Cardiac septum (tissue), 1 donor: ENCODE measurements at regions of chr6 and their contacts with region 1.

Region 1: GRCh38 chr6:16332175-16332542 is 93.8 kb downstream of the GMPR start:
- DNase-seq: peak; percentile 89

Region 2: GRCh38 chr6:16372029-16372776 is 40.0 kb after region 1 on chr6:
- intact Hi-C with region 1: no loop called
- DNase-seq: no peak

Region 3: GRCh38 chr6:16409531-16410441 is 77.6 kb after region 1 on chr6:
- intact Hi-C with region 1: loop called (anchors 2 kb)
- DNase-seq: peak; percentile 85

Region 4: DNA sequence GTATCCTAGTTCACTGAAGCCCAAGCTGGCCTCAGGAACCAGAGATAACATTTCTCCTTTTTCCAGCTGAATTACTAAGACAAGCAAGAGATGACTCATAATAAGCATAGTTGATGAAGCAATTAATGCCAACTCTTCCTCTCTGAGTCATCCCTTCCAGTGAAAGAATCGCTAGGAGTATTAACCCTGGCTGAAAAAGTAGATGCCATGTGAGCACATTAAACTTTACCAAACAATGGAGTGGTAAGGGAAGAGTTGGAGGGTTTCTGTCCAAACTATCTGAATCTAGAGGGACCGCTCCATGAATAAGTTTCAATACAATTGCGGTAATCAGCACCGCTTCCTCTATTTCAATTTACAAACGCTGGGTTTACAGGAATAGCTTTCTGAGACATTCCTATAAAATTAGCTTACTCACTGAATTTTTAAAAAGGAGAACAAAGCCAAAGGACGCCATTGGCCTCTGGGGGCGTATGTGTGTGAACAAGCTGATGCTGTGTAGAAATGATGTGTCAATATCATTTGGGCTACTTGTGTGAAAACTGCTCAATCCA is 380.8 kb after region 1 on chr6:
- intact Hi-C with region 1: no loop called
- DNase-seq: no peak